GM12878 (cell line): ENCODE measurements at regions of chr2 and their contacts with region 1.

Region 1: DNA sequence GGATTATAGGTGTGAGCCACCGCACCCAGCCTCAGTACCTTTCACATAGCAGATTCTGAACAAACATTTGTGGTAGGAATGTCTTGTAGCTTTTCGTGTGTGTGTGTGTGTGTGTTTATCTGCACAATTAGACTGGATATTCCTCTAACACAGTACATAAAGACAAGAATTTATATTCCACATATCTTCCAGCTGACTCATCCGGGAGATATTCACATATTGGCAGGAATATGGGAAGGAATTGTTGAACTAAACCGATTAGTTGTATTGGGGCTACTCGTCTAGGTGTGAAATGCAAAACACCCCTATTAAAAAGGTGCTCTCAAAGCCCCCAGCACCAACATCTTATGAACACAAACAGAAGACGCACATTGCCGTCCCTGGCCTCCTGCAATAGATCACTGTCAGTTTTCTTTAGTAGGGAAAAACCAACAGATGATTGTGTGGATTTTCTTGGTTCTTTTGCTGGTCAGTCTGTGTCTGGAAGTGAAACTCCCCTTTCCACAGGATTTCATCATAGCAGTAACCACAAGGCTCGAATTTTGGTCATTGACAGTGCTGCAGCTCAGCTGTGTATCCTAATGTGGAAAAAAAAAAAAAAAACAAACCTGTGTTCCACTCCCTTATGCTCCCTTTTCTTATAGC is 208.5 kb upstream of the ACVR2A start:
- DNase-seq: no peak
- ATAC-seq: peak; percentile 9
- H3K4me3 ChIP-seq: no peak overlapping the region; the same call in 1 of the 2 replicates
- H3K27ac ChIP-seq: peak overlapping the region; percentile 59
- H3K4me1 ChIP-seq: peaks cover 64% of the 10 kb centered on the region
- H3K27me3 ChIP-seq: no peaks in the 10 kb centered on the region
- CTCF ChIP-seq: no peak
- EP300 ChIP-seq: 0 out of 4 replicates have a peak, but pooled peaks of 1 of the 2 experiments have one; percentile 20
- POLR2A ChIP-seq: no peak
- RAD21 ChIP-seq: no peak

Region 2: DNA sequence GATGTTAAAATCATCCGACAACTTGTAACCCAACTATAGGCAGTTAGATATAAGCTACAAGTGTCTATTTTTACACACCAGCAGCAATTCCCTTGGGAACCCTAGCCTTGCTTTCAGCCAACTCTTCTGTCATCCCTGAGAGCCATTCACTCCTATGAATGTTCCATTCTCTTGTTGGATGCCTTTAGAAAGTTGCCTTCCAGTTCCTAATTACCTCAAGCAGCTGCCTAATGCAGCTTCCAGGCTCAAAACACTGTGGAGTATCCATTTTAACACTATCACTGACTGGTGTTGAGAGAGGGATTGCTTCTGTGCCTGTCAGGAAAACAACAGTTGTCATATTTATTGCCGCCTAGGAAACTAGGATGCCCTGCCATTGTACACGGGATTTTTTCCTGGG is 193.5 kb before region 1 on chr2:
- CTCF ChIA-PET with region 1: no interaction called
- POLR2A ChIA-PET with region 1: no interaction called
- RAD21 ChIA-PET with region 1: no interaction called
- SMC1A ChIA-PET with region 1: no interaction called
- in situ Hi-C with region 1: no loop called
- intact Hi-C with region 1: no loop called
- DNase-seq: no peak
- ATAC-seq: no peak
- H3K4me3 ChIP-seq: no peak overlapping the region
- H3K27ac ChIP-seq: no peak overlapping the region
- H3K4me1 ChIP-seq: no peaks in the 10 kb centered on the region
- H3K27me3 ChIP-seq: no peaks in the 10 kb centered on the region
- CTCF ChIP-seq: no peak
- EP300 ChIP-seq: no peak
- POLR2A ChIP-seq: no peak
- RAD21 ChIP-seq: no peak

Region 3: DNA sequence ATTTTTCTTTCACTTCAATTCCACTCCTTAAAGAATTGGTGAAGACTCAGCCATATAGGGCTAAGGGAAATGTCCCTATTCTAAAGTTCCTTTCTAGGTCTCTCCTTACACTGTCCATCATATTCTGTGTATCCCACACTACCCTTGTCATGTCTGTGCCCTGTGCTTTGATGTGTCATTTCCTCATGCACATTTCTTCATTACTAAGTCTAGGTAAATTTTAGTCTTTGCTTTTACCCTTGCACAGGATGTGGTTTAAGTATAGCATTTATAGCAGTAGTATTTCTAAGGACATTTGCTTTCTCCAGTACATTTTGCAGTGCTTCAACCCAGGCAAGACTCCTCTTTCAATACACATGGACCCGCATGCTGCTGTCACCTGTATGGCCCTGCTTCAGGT is 13.0 kb before region 1 on chr2:
- CTCF ChIA-PET with region 1: interaction called, 7 read pairs
- POLR2A ChIA-PET with region 1: interaction called, 12 read pairs
- RAD21 ChIA-PET with region 1: interaction called, 23 read pairs
- SMC1A ChIA-PET with region 1: interaction called, 84 read pairs
- in situ Hi-C with region 1: no loop called
- intact Hi-C with region 1: no loop called
- DNase-seq: no peak
- ATAC-seq: peak; percentile 93
- H3K4me3 ChIP-seq: no peak overlapping the region
- H3K27ac ChIP-seq: no peak overlapping the region
- H3K4me1 ChIP-seq: peaks cover 8% of the 10 kb centered on the region
- H3K27me3 ChIP-seq: no peaks in the 10 kb centered on the region
- CTCF ChIP-seq: no peak
- EP300 ChIP-seq: no peak
- POLR2A ChIP-seq: no peak
- RAD21 ChIP-seq: no peak

Region 4: DNA sequence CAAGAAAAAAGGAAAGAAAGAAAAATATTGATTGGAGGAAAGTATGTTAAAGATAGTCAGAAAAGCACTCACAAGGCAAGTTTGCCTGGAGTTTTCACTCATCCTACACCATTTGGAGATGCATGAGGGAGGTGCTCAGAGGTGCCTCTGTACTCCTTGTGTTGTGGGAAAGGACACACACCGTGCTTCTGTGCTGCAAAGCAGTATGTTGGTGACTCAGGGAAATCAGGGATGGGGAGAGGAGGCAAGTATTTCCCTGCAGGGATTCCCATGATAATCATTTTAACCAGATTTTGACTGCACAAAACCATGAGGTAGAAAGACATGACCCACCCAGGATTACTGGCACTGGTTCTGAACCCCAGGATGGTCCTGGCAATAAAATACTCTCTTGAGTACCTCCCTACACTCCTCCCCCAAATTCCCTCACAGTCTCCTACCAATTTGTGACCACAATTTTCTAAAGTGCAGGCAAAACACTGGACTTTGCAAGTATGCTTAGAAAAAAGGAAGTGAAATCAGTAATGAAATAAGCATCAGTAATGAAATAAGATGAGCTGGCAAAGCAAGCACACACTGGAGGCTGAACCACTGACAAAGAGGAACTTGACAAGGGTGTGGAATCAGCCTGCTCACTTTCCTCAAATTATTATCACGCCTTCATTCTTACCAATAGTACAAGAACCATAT is 53.0 kb after region 1 on chr2:
- CTCF ChIA-PET with region 1: interaction called, 4 read pairs
- POLR2A ChIA-PET with region 1: interaction called, 5 read pairs
- RAD21 ChIA-PET with region 1: interaction called, 4 read pairs
- SMC1A ChIA-PET with region 1: interaction called, 4 read pairs
- in situ Hi-C with region 1: no loop called
- intact Hi-C with region 1: loop called (anchors 2 kb)
- DNase-seq: peak; percentile 77
- ATAC-seq: peak; percentile 100
- H3K4me3 ChIP-seq: no peak overlapping the region
- H3K27ac ChIP-seq: no peak overlapping the region
- H3K4me1 ChIP-seq: peaks cover 12% of the 10 kb centered on the region
- H3K27me3 ChIP-seq: no peaks in the 10 kb centered on the region
- CTCF ChIP-seq: no peak
- EP300 ChIP-seq: peak; percentile 52 to 92; a peak in 3 of 4 replicates
- POLR2A ChIP-seq: no peak
- RAD21 ChIP-seq: no peak

Region 5: DNA sequence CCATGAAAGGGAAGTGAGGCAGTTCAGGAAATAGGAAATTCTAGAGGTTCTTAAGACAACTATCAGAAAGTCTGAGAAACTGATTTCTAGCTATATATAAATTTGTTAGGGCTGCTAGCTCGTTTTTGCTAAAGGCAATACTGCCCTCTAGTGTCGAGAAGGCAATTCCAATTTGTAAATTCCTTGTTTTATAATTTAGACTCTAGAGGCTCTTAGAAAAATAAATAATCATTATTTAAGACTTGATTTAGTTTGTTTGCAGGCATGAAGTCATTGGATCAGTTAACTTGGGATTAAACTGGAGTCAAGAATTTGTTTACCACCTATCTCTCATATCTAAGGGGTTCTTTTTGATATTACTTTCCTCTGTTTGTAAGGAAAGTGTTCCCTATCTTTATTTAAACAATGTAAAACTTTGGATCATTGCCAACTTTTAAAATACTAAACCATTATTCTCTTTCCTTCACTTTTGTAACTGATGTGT is 274.7 kb after region 1 on chr2:
- CTCF ChIA-PET with region 1: no interaction called
- POLR2A ChIA-PET with region 1: no interaction called
- RAD21 ChIA-PET with region 1: no interaction called
- SMC1A ChIA-PET with region 1: no interaction called
- in situ Hi-C with region 1: no loop called
- intact Hi-C with region 1: loop called (anchors 5 kb)
- DNase-seq: peak; percentile 21
- ATAC-seq: peak; percentile 65
- H3K4me3 ChIP-seq: no peak overlapping the region
- H3K27ac ChIP-seq: no peak overlapping the region
- H3K4me1 ChIP-seq: no peaks in the 10 kb centered on the region; the same call in 1 of the 2 replicates
- H3K27me3 ChIP-seq: no peaks in the 10 kb centered on the region
- CTCF ChIP-seq: peak; percentile 48 to 73 (median 50); a peak in 5 of 6 replicates
- EP300 ChIP-seq: no peak
- POLR2A ChIP-seq: no peak
- RAD21 ChIP-seq: peak; percentile 92

Region 6: DNA sequence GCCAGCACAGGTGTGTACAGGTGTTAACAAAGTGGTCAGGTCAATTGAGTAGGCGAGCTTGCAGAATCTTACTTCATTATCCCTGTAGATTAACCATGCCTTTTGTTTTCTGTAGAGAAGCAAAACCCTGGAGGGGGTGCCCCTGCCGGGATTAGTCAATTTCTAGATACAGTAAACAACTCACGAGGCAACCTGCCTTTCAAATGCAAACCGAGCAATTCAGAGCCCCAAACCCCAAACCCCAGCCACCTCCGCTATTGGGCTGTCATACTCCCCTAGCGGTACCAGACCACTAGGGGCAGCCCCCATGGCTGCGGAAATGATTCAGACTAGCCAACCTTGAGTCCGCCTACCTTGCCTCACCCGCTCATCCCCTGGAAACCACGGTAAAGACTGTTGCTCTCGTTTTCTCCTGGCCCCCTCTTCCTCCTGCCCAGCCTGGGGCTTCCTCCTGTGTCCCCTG is 1177.3 kb after region 1 on chr2:
- CTCF ChIA-PET with region 1: no interaction called
- POLR2A ChIA-PET with region 1: no interaction called
- RAD21 ChIA-PET with region 1: no interaction called
- SMC1A ChIA-PET with region 1: no interaction called
- in situ Hi-C with region 1: no loop called
- intact Hi-C with region 1: no loop called
- DNase-seq: peak; percentile 76
- ATAC-seq: peak; percentile 99
- H3K4me3 ChIP-seq: no peak overlapping the region
- H3K27ac ChIP-seq: peak overlapping the region; percentile 31; the same call in 1 of the 2 replicates
- H3K4me1 ChIP-seq: peaks cover 16% of the 10 kb centered on the region
- H3K27me3 ChIP-seq: peaks cover 0 to 4% of the 10 kb centered on the region in 2 experiments; a peak in 2 of 4 replicates
- CTCF ChIP-seq: peak; percentile 27 to 73 (median 68)
- EP300 ChIP-seq: peak; percentile 67 to 70; a peak in 3 of 4 replicates
- POLR2A ChIP-seq: peak; percentile 36; the same call in 1 of the 2 replicates
- RAD21 ChIP-seq: peak; percentile 44

Region 7: GRCh38 chr2:149597668-149598326 is 1961.4 kb after region 1 on chr2:
- CTCF ChIA-PET with region 1: no interaction called
- POLR2A ChIA-PET with region 1: no interaction called
- RAD21 ChIA-PET with region 1: no interaction called
- SMC1A ChIA-PET with region 1: no interaction called
- in situ Hi-C with region 1: loop called (anchors 25 kb)
- intact Hi-C with region 1: no loop called
- DNase-seq: peak; percentile 57
- ATAC-seq: peak; percentile 96
- H3K4me3 ChIP-seq: no peak overlapping the region
- H3K27ac ChIP-seq: no peak overlapping the region
- H3K4me1 ChIP-seq: 0 out of 2 replicates have a peak, but pooled peaks cover 4% of the 10 kb centered on the region
- H3K27me3 ChIP-seq: no peaks in the 10 kb centered on the region
- CTCF ChIP-seq: peak; percentile 79 to 85 (median 85)
- EP300 ChIP-seq: no peak
- POLR2A ChIP-seq: no peak
- RAD21 ChIP-seq: peak; percentile 94